Panc1 (cell line): ENCODE measurements at regions of chr11 and their contacts with region 1.

Region 1: DNA sequence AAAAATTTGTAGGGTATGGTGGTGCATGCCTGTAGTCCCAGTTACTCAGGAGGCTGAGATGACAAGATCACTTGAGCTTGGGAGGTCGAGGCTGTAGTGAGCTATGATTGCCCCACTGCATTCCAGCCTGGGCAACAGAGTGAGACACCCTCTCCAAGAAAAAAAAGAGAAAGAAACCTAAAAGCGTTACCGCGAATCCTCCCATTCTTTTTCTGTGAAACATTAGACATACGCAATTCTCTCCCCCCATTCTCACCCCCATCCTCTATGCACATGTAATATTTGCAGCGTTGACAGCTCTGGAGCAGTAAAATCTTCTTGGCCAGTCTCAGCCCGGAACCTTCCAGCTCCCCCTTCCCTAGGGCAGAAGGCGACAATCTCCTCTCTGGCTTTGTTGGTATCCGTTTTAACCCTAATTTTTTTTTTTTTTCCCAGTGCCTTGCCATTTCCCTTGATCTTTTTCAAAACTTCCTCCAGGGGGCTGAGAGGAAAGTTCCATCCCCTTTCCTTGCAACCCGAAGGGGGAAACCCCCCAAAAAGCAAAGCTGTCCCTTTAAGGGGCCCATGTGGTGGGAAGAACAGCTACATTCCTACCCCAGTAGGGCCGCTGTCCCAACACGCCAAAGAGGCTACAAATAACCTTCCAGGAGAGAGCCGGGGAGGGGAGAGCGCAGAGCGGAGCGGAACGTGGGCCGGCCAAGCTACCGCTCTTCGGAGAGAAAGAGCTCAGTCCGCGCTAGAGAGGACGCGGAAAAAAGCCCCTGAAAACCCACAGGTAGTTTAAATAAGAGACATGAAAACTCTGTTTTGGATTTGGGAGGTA is 1.9 kb downstream of the LRP4 start:
- DNase-seq: no peak
- ATAC-seq: peak; percentile 81
- H3K4me3 ChIP-seq: peak overlapping the region; percentile 52 to 59
- H3K27ac ChIP-seq: peak overlapping the region; percentile 53
- H3K4me1 ChIP-seq: peaks cover 28% of the 10 kb centered on the region
- H3K27me3 ChIP-seq: no peaks in the 10 kb centered on the region
- CTCF ChIP-seq: peak; percentile 13; the same call in 1 of the 2 replicates

Region 2: DNA sequence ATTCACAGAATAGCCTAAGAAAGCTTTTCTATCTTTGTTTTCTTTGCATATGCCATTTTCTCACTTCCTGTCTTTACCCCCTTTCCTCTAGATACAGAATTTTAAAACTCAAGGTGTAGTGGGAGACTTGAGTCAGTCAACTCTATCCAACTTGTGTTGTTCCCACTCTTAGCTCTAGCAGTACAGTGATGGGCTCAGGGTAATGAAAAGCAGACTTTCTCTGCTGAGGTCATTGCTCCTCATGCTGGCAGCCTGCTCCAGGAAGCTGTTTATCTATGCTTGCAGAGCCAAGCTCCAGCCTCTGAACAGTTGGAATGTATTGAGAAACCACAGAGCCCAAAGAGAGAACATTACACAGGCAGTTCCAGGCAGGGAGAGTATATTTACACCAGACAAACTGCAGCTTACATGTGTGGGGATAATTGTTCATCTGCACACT is 88.1 kb after region 1 on chr11:
- CTCF ChIA-PET with region 1: no interaction called
- POLR2A ChIA-PET with region 1: no interaction called
- in situ Hi-C with region 1: no loop called
- intact Hi-C with region 1: no loop called
- DNase-seq: no peak
- ATAC-seq: peak; percentile 73
- H3K4me3 ChIP-seq: no peak overlapping the region
- H3K27ac ChIP-seq: no peak overlapping the region
- H3K4me1 ChIP-seq: no peaks in the 10 kb centered on the region
- H3K27me3 ChIP-seq: no peaks in the 10 kb centered on the region
- CTCF ChIP-seq: no peak

Region 3: DNA sequence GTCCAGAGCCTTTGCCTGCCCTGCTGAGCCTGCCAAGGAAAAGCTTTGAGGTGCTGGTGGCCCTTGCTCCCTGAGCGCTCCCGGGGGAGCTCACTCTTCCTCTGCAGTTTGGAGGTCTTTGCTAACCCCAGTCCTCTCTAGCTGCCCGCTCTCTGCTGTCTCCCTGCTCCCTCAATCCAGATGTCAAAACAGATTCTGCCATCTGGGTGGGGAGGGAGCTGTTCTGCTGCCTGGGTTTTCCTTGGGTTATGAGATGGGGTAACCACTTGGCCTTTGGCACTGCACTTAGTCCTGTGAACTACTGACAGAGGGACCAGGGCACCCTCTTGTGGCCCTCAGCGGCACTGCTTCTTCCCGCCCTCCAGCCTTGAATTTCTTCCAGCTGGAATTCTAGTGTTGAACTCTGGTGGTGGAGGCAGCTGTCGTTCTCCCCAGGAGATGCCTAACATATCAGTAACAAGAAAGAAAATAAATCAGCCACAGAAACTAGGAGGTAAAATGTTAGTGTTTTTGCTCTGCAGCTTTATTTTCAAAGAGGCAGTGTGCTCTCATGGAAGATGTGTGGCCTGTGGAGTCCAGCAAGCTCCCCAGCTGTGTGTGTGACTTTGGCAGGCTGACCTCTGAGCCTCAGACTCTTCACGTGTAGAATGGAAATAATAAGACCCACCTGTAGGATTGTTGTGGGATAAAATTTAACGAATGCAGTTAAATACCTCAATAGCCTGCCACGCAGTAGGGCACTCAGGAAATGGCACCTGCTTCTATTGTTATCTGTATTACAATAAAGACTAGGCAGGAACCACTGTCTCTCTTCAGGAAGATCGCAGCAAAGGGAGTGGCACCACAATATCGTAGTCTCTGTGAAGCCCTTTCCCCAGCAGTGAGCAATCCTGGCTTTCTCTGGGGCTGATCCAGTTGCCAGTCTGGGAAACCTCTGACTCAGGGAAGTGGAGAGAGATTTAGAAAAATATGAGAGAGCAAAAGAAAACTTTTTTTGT is 236.8 kb after region 1 on chr11:
- CTCF ChIA-PET with region 1: interaction called, 23 read pairs
- POLR2A ChIA-PET with region 1: no interaction called
- in situ Hi-C with region 1: no loop called
- intact Hi-C with region 1: no loop called
- DNase-seq: no peak
- ATAC-seq: peak; percentile 88
- H3K4me3 ChIP-seq: no peak overlapping the region
- H3K27ac ChIP-seq: no peak overlapping the region
- H3K4me1 ChIP-seq: peaks cover 4% of the 10 kb centered on the region; the same call in 1 of the 2 replicates
- H3K27me3 ChIP-seq: no peaks in the 10 kb centered on the region
- CTCF ChIP-seq: peak; percentile 97

Region 4: DNA sequence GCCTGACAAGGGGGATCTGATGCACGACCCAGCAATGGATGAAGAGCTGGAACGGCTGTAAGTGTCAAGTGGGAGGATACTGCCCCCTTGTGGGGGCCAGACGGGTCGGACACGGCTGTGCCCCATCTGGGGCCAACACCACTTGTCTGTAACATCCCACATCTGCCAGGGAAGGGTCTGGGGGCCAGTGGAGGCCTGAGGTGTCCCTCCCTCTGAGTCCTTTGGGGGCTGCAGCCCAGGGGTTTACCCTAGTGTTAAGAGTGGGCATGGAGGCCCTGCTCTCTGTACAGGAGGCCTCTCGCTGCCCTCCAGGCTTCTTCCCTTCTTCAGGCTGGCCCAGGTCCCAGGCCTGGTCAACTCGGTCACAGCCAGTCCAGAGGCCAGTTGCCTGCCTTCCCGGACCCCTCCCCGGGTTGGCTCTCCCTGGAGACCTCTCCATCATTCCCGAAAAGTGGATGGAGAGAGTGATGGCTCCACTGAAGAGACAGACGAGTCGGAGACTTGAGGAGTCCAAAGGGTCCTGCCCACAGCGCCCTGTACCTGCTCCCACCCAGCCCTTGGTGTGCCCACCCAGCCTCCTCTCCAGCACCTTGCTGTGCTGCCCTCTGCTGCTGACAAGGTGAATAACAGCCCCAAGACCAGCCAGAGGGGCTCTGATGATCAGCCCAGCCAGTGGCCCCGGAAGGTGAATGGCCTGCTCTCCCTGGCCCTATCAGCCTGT is 244.8 kb after region 1 on chr11:
- CTCF ChIA-PET with region 1: no interaction called
- POLR2A ChIA-PET with region 1: interaction called, 15 read pairs
- in situ Hi-C with region 1: no loop called
- intact Hi-C with region 1: no loop called
- DNase-seq: no peak
- ATAC-seq: peak; percentile 88
- H3K4me3 ChIP-seq: no peak overlapping the region
- H3K27ac ChIP-seq: no peak overlapping the region
- H3K4me1 ChIP-seq: peaks cover 5% of the 10 kb centered on the region; the same call in 1 of the 2 replicates
- H3K27me3 ChIP-seq: no peaks in the 10 kb centered on the region
- CTCF ChIP-seq: peak; percentile 89

Region 5: GRCh38 chr11:47337229-47337924 is 420.9 kb after region 1 on chr11:
- CTCF ChIA-PET with region 1: interaction called, 10 read pairs
- POLR2A ChIA-PET with region 1: no interaction called
- in situ Hi-C with region 1: no loop called
- intact Hi-C with region 1: no loop called
- DNase-seq: no peak
- ATAC-seq: no peak
- H3K4me3 ChIP-seq: no peak overlapping the region
- H3K27ac ChIP-seq: no peak overlapping the region
- H3K4me1 ChIP-seq: no peaks in the 10 kb centered on the region
- H3K27me3 ChIP-seq: no peaks in the 10 kb centered on the region
- CTCF ChIP-seq: no peak